ENCODE measurements at regions of chr9 and their contacts with region 1.

Region 1: GRCh38 chr9:83596896-83597504 is 25.9 kb upstream of the IDNK start:
- DNase-seq: no peak
- ATAC-seq: peak; percentile 70; the same call in 1 of the 2 replicates
- H3K4me3 ChIP-seq: no peak overlapping the region
- H3K27ac ChIP-seq: no peak overlapping the region
- H3K4me1 ChIP-seq: no peaks in the 10 kb centered on the region
- H3K27me3 ChIP-seq: no peaks in the 10 kb centered on the region
- CTCF ChIP-seq: peak; percentile 78

Region 2: DNA sequence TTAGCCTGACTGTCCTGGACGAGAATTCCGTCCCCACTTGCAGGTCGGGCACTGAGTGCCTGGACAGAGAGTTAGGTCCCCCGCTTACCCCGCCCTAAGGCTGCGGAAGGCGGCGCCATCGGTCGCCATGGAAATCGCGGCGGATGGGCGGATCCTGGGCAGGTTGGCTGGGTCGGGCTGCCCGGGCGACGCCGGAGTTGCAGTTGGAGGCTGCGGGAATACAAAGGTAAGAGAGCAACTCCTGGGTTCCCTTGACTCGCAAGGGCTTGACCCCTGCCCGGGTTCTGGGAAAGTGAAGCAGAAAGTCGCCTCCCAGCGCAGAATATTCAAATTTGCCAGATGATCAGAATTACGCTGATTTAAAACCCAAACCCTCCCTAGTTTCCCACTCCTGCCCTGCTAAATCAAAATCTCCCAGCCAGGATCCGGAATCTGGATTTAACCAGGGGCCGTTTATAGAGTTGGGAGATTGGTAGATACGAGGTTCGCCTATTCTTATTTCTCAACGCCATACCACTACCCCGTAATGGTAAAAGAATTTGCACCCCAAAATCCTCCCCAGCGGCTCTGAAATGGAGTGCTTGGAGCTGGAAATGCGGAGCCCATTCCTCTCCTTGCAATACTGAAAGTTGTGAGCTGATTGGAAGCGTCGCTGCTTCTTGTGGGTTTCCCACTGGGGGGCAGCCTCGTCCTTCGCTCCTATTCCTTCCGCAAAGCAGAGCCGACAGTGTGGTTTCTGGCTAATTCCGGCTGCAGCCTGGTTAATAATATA is 377.7 kb before region 1 on chr9:
- CTCF ChIA-PET with region 1: interaction called, 4 read pairs
- POLR2A ChIA-PET with region 1: no interaction called
- in situ Hi-C with region 1: no loop called
- intact Hi-C with region 1: loop called (anchors 5 kb)
- DNase-seq: peak; percentile 28
- ATAC-seq: peak; percentile 96
- H3K4me3 ChIP-seq: peak overlapping the region; percentile 70 to 73
- H3K27ac ChIP-seq: peak overlapping the region; percentile 68
- H3K4me1 ChIP-seq: no peaks in the 10 kb centered on the region
- H3K27me3 ChIP-seq: no peaks in the 10 kb centered on the region
- CTCF ChIP-seq: peak; percentile 85

Region 3: GRCh38 chr9:83665580-83666200 is 68.7 kb after region 1 on chr9:
- CTCF ChIA-PET with region 1: no interaction called
- POLR2A ChIA-PET with region 1: no interaction called
- in situ Hi-C with region 1: no loop called
- intact Hi-C with region 1: no loop called
- DNase-seq: no peak
- ATAC-seq: no peak
- H3K4me3 ChIP-seq: no peak overlapping the region
- H3K27ac ChIP-seq: no peak overlapping the region
- H3K4me1 ChIP-seq: no peaks in the 10 kb centered on the region
- H3K27me3 ChIP-seq: no peaks in the 10 kb centered on the region
- CTCF ChIP-seq: no peak

Measured in Panc1 (cell line).